Activated naive CD4-positive, alpha-beta T cell treated with anti-CD3 and anti-CD28 coated beads for 36 hours (primary cell): ENCODE measurements at regions of chr6 and their contacts with region 1.

Region 1: GRCh38 chr6:109373762-109374161 is 8.5 kb downstream of the CD164 start:
- DNase-seq: peak; percentile 74
- H3K4me3 Mint-ChIP-seq: peak overlapping the region; percentile 20
- H3K27ac Mint-ChIP-seq: peak overlapping the region; percentile 78
- H3K4me1 Mint-ChIP-seq: peaks cover 63% of the 10 kb centered on the region
- H3K27me3 Mint-ChIP-seq: no peaks in the 10 kb centered on the region

Region 2: DNA sequence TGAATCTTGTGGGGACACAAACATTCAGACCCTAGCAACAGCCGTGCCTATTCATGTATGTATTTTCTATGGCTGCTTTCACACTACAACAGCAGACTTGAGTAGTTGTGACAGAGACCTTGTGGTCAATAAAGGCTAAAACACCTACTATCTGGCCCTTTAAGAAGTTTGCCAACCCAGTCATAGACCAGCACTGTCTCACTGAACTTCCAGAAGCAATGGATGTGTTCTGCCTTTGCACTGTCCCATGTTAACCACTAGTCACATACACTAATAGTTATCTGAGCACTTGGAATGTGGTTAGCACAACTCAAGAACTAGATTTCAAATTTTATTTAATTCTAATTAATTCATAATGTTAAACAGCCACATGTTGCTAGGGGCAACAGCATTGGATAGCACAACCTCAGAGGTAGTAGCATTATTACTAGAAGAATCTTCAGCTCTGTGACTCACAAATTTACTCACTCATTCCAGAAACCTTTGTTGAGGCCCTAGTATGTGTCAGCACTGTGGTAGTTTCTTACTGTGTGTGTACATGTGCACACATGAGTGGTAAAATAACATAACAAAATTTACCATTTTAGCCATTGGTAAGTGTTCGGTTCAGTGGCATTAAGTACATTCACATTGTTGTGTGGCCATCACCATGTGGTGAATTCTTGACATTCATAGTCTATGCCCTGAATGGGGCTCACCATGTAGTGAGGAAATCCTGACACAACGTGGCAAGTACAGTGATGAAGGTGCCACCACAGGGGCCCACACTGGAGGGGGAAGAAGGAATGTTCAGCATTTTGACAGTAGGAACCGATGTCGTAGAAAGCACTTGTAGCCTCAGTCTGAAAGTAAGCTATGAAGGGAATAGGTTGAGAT is 171.1 kb before region 1 on chr6:
- CTCF ChIA-PET with region 1: no interaction called
- intact Hi-C with region 1: loop called (anchors 2 kb)
- DNase-seq: peak; percentile 62
- H3K4me3 Mint-ChIP-seq: no peak overlapping the region
- H3K27ac Mint-ChIP-seq: no peak overlapping the region
- H3K4me1 Mint-ChIP-seq: peaks cover 7% of the 10 kb centered on the region
- H3K27me3 Mint-ChIP-seq: no peaks in the 10 kb centered on the region

Region 3: GRCh38 chr6:109308018-109308492 is 65.7 kb before region 1 on chr6:
- CTCF ChIA-PET with region 1: no interaction called
- intact Hi-C with region 1: loop called (anchors 2 kb)
- DNase-seq: peak; percentile 45
- H3K4me3 Mint-ChIP-seq: no peak overlapping the region
- H3K27ac Mint-ChIP-seq: no peak overlapping the region
- H3K4me1 Mint-ChIP-seq: peaks cover 13% of the 10 kb centered on the region
- H3K27me3 Mint-ChIP-seq: no peaks in the 10 kb centered on the region